Activated CD4-positive, alpha-beta T cell treated with anti-CD3 and anti-CD28 coated beads, Interleukin-2, amount 10 ng/mL, durations not matched to agents 24 days and 14 days (primary cell): ENCODE measurements at regions of chr16 and their contacts with region 1.

Region 1: GRCh38 chr16:22190776-22191531 is 15.1 kb upstream of the EEF2K start:
- DNase-seq: peak; percentile 100
- H3K4me3 Mint-ChIP-seq: peak overlapping the region; percentile 91
- H3K27ac Mint-ChIP-seq: peak overlapping the region; percentile 99
- H3K4me1 Mint-ChIP-seq: peaks cover 56% of the 10 kb centered on the region
- H3K27me3 Mint-ChIP-seq: peaks cover 3% of the 10 kb centered on the region

Region 2: GRCh38 chr16:21599233-21600030 is 591.5 kb before region 1 on chr16 and contains the start of gene METTL9:
- intact Hi-C with region 1: loop called (anchors 2 kb)
- DNase-seq: peak; percentile 99
- H3K4me3 Mint-ChIP-seq: peak within 1 kb of the TSS; percentile 97
- H3K27ac Mint-ChIP-seq: peak within 1 kb of the TSS; percentile 93
- H3K4me1 Mint-ChIP-seq: peaks cover 45% of the 10 kb centered on the region
- H3K27me3 Mint-ChIP-seq: no peaks in the 10 kb centered on the region
- total RNA-seq, gene METTL9: 65.6 and 66.7 TPM in 2 replicates

Region 3: GRCh38 chr16:21713549-21714368 is 477.2 kb before region 1 on chr16:
- intact Hi-C with region 1: no loop called
- DNase-seq: no peak
- H3K4me3 Mint-ChIP-seq: no peak overlapping the region
- H3K27ac Mint-ChIP-seq: no peak overlapping the region
- H3K4me1 Mint-ChIP-seq: no peaks in the 10 kb centered on the region
- H3K27me3 Mint-ChIP-seq: peaks cover 4% of the 10 kb centered on the region

Region 4: DNA sequence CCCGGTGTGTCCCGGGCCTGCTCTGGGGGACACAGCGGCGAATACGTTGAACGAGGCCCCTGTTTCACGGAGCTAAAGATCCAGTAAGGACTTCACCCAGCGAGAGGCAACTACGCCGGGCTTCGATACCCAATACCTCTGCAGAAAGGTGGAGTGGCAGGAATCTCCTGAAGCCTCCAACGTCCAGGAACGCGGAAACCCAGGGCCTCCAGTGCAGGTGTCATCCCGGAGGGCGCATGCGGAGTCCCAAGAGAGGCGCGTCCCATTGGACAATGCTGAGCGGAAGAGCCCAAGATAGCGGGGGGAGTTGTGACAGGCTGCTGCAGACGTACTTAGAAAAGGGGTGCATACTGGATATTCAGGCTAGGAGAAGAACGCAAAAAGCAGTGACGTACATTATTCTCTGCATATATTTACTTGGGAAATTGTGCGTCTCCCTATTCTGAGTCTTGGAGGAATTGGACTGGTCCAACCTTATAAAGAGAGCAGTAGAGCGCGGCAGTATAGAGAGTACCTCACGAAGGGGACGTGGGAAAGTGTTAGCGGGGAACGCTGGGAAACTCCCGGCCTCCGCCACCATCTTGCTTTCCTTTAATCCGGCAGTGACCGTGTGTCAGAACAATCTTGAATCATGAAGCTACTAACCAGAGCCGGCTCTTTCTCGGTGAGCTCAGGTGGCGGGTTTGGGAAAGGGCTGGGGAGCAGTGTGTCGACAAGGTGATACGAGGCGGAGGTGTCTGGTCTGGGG is 238.0 kb before region 1 on chr16 and contains the start of gene UQCRC2:
- intact Hi-C with region 1: loop called (anchors 1 kb)
- DNase-seq: peak; percentile 96
- H3K4me3 Mint-ChIP-seq: peak within 1 kb of the TSS; percentile 98
- H3K27ac Mint-ChIP-seq: peak within 1 kb of the TSS; percentile 97
- H3K4me1 Mint-ChIP-seq: peaks cover 32% of the 10 kb centered on the region
- H3K27me3 Mint-ChIP-seq: no peaks in the 10 kb centered on the region
- total RNA-seq, gene UQCRC2: 256 and 266 TPM in 2 replicates

Region 5: DNA sequence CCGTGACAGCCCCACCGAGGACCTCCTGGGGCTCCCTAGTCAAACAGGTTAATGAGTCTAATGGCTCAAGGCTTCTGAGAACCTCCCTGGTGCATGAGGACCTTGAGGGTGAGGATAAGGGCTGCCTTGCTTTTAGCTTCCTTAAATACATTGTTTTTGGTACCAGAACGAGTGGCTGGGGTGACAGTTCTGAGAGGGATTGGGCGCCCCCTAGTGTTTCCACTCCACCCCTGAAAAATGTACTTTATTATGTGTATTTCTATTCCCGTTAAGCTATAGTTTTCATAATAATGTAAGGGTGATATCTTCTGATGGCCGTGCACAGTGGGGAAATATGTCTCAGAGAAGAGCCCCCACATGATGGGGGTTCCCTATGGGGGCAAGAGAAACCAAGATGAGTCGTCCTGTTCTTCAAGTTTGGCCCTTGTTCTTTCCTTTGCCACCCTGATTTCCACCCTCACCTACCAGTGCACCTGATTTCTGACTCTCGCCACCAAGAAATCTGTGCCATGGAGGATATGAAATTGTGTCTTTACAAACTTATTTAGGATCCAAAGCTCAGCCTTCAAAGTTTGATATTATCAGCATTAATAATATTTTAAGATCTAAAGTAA is 113.1 kb before region 1 on chr16:
- intact Hi-C with region 1: loop called (anchors 1 kb)
- DNase-seq: peak; percentile 91
- H3K4me3 Mint-ChIP-seq: no peak overlapping the region
- H3K27ac Mint-ChIP-seq: no peak overlapping the region
- H3K4me1 Mint-ChIP-seq: no peaks in the 10 kb centered on the region
- H3K27me3 Mint-ChIP-seq: no peaks in the 10 kb centered on the region

Region 6: DNA sequence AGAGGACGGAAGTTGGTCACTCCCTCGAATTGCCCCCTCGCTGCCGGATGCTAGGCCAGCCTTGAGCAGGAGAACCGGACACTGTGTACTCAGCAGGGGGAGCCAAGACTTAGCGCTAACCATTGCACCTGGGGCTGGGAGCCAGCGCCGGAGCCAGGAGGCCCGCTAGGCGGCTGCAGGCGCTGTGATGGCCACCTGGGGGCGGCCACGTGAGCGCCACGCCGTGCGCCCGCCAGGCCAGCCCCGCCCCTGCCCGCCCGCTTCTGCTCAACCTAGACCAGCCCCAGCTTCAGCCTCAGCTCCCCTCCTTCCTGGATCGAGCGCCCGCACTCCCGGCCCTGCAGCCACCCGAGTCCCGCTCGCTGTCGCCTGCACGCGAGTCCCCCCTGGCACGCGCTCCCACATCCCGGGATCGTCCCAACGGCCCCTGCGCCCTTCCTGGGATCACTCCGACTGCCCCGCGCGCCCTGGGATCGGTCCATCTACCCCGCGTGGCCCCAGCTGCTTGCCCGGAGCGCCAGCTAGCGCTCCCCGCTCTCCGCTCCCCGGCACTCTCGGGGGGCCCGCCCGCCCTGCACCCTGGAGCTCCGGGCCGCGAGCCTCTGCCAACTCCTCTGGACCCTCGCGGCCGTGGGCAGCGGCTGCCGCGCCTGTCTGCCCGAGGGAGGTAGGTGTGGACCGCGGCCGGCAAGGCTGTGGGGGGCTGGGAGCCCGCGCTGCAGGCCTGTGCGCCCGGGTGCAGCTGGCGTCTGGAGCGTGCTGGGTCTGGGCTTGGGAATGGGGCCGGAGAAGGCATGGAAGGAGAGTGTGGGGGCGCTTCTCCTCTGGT is 15.3 kb after region 1 on chr16 and contains the start of gene EEF2K:
- intact Hi-C with region 1: loop called (anchors 1 kb)
- DNase-seq: peak; percentile 94
- H3K4me3 Mint-ChIP-seq: peak within 1 kb of the TSS; percentile 89
- H3K27ac Mint-ChIP-seq: peak within 1 kb of the TSS; percentile 94
- H3K4me1 Mint-ChIP-seq: peaks cover 27% of the 10 kb centered on the region
- H3K27me3 Mint-ChIP-seq: no peaks in the 10 kb centered on the region
- total RNA-seq, gene EEF2K: 30.5 and 33.9 TPM in 2 replicates

Region 7: GRCh38 chr16:22374311-22375116 is 183.6 kb after region 1 on chr16 and contains the start of gene CDR2:
- intact Hi-C with region 1: loop called (anchors 2 kb)
- DNase-seq: peak; percentile 100
- H3K4me3 Mint-ChIP-seq: peak within 1 kb of the TSS; percentile 98
- H3K27ac Mint-ChIP-seq: peak within 1 kb of the TSS; percentile 95
- H3K4me1 Mint-ChIP-seq: peaks cover 39% of the 10 kb centered on the region
- H3K27me3 Mint-ChIP-seq: peaks cover 2% of the 10 kb centered on the region
- total RNA-seq, gene CDR2: 38.2 and 40.9 TPM in 2 replicates